K562 (cell line): ENCODE measurements at regions of chr20 and their contacts with region 1.

Region 1: DNA sequence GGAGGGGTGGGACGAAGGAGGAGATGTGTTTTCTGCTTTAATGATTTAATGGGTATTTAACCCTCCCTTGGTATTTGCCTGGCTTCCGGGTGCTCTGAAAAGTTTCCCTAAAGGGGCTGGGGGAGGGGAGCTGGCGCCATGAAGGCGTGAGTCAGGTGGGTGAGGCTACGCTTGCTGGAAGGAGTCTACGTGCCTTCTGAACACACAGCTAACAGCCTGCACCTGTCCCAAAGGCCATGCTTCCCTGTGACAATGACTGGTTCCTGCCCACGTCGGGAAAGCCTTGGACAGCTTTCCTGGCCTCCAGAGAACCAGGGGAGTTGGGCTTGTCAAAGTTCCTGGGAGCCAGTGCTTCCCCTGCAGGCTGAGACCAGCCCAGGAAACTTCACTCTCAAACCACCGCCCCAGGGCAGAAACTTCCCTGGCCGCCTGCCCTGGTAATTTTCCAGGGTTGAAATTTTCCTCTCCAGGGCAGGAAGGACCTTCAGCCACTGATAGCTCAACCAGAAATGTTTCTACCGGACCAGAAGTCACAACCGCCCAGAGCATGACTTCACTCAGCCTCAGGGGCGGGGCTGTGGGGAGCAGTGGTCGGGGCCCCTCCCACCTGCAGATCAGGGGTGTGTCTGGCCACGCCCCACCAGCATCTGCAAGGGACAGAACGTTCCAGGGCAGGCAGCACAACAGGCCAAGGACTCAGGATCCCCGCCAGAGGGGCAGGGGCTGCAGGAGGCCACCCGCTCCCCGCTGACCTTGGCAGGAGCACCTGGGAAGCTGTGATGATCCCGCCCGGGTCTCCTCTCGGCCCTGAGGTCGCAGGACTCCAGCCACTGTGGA is 18.6 kb upstream of the SLCO4A1 start:
- DNase-seq: peak; percentile 95 to 99 (median 99)
- ATAC-seq: peak; percentile 99
- H3K4me3 ChIP-seq: peak overlapping the region; percentile 6; the same call in 1 of the 2 replicates
- H3K27ac ChIP-seq: peak overlapping the region; percentile 95
- H3K4me1 ChIP-seq: peaks cover 13 to 60% of the 10 kb centered on the region in 2 experiments
- H3K27me3 ChIP-seq: peaks cover 0 to 18% of the 10 kb centered on the region in 2 experiments; a peak in 2 of 5 replicates
- CTCF ChIP-seq: no peak
- EP300 ChIP-seq: no peak; the same call in 1 of the 2 replicates
- POLR2A ChIP-seq: peak; percentile 88
- RAD21 ChIP-seq: no peak

Region 2: GRCh38 chr20:62642040-62642665 is 18.4 kb after region 1 on chr20 and contains the start of gene SLCO4A1:
- CTCF ChIA-PET with region 1: no interaction called
- POLR2A ChIA-PET with region 1: interaction called, 8 read pairs
- in situ Hi-C with region 1: no loop called
- intact Hi-C with region 1: loop called (anchors 1 kb)
- DNase-seq: peak; percentile 91 to 99 (median 98)
- ATAC-seq: peak; percentile 94
- H3K4me3 ChIP-seq: peak within 1 kb of the TSS; percentile 68
- H3K27ac ChIP-seq: peak within 1 kb of the TSS; percentile 80
- H3K4me1 ChIP-seq: peaks cover 10 to 71% of the 10 kb centered on the region in 2 experiments
- H3K27me3 ChIP-seq: no peaks in the 10 kb centered on the region; a peak in 2 of 5 replicates
- CTCF ChIP-seq: 0 out of 6 replicates have a peak, but pooled peaks of 1 of the 3 experiments have one; percentile 9
- EP300 ChIP-seq: no peak; the same call in 1 of the 2 replicates
- POLR2A ChIP-seq: peak; percentile 84
- RAD21 ChIP-seq: no peak
- polyA plus RNA-seq, gene SLCO4A1: 1.6 to 3.1 TPM

Region 3: GRCh38 chr20:62808211-62808865 is 184.6 kb after region 1 on chr20:
- CTCF ChIA-PET with region 1: no interaction called
- POLR2A ChIA-PET with region 1: no interaction called
- in situ Hi-C with region 1: no loop called
- intact Hi-C with region 1: loop called (anchors 5 kb)
- DNase-seq: peak; percentile 66 to 81 (median 72)
- ATAC-seq: peak; percentile 81
- H3K4me3 ChIP-seq: no peak overlapping the region
- H3K27ac ChIP-seq: no peak overlapping the region
- H3K4me1 ChIP-seq: peaks cover 11 to 64% of the 10 kb centered on the region in 2 experiments
- H3K27me3 ChIP-seq: no peaks in the 10 kb centered on the region
- CTCF ChIP-seq: peak; percentile 86 to 87 (median 86)
- EP300 ChIP-seq: no peak
- POLR2A ChIP-seq: no peak
- RAD21 ChIP-seq: peak; percentile 78 to 83